ENCODE measurements at regions of chr12 and their contacts with region 1.

Region 1: GRCh38 chr12:46516933-46517578 is 144.5 kb upstream of the SLC38A2 start:
- DNase-seq: peak; percentile 48
- H3K4me3 Mint-ChIP-seq: peak overlapping the region; percentile 3
- H3K27ac Mint-ChIP-seq: peak overlapping the region; percentile 94
- H3K4me1 Mint-ChIP-seq: peaks cover 68% of the 10 kb centered on the region
- H3K27me3 Mint-ChIP-seq: no peaks in the 10 kb centered on the region

Region 2: DNA sequence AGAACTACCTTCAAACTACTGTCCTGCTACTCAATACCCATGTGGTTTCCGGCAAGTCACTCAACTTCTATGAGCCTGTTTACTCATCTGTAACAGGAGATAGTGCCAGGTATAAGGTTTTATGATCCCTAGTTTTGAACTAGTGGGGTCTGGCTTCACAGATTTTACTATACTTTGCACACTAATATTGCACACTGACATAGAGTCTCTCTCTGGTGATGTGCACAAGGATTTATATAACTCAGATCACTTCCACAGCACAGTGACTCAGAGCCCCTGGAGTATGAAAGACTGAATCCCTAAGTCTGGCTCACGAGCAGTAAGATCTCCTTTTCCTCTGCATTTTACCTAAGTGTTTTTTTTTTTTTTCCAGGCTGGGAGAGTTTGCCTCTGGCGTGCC is 74.8 kb before region 1 on chr12:
- CTCF ChIA-PET with region 1: no interaction called
- DNase-seq: no peak
- H3K4me3 Mint-ChIP-seq: no peak overlapping the region
- H3K27ac Mint-ChIP-seq: no peak overlapping the region
- H3K4me1 Mint-ChIP-seq: peaks cover 16% of the 10 kb centered on the region
- H3K27me3 Mint-ChIP-seq: peaks cover 10% of the 10 kb centered on the region

Region 3: DNA sequence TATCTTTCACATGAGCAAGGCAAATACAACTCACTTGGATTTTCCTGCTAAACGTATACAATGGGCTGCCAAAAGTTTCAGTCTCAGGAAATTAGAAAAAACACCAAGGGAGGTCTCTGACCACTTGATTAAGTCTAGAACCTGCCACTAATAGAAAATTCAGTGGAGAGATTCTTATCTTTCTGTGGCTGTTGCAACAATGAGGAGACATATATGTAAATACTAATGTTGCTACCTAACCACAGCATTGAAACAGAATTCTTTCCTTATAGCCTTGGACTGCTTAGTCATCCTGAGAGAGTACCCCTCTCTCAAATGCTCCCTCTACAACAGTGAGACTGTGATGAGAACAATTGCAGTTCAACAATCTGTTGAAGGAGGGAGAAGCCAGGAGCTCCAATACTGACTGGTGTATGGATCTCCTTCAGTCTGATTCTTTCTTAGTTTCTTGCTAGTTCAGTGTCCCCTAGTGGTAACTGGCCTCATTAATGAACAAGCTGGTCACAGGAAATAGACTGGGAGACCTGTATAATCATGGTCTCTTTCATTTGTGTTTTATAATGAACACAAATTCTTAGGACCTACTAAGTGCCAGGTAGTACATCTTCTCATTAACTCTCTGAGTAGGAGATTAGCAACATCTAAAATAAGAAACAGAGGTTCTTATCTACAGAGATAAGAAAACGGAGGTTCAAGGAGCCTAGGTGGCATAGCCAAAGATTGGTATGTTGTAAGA is 144.2 kb after region 1 on chr12:
- CTCF ChIA-PET with region 1: interaction called, 10 read pairs
- DNase-seq: no peak
- H3K4me3 Mint-ChIP-seq: no peak overlapping the region
- H3K27ac Mint-ChIP-seq: no peak overlapping the region
- H3K4me1 Mint-ChIP-seq: peaks cover 34% of the 10 kb centered on the region
- H3K27me3 Mint-ChIP-seq: no peaks in the 10 kb centered on the region

Measured in activated naive CD4-positive, alpha-beta T cell treated with anti-CD3 and anti-CD28 coated beads, Interleukin-2, amount 10 ng/mL, durations not matched to agents 7 days and 5 days (primary cell).